Activated naive CD4-positive, alpha-beta T cell treated with anti-CD3 and anti-CD28 coated beads for 36 hours (primary cell): ENCODE measurements at regions of chr3 and their contacts with region 1.

Region 1: GRCh38 chr3:69161587-69162307 is 39.4 kb upstream of the LMOD3 start:
- DNase-seq: peak; percentile 56
- H3K4me3 Mint-ChIP-seq: no peak overlapping the region
- H3K27ac Mint-ChIP-seq: no peak overlapping the region
- H3K4me1 Mint-ChIP-seq: peaks cover 11% of the 10 kb centered on the region
- H3K27me3 Mint-ChIP-seq: peaks cover 1% of the 10 kb centered on the region

Region 2: DNA sequence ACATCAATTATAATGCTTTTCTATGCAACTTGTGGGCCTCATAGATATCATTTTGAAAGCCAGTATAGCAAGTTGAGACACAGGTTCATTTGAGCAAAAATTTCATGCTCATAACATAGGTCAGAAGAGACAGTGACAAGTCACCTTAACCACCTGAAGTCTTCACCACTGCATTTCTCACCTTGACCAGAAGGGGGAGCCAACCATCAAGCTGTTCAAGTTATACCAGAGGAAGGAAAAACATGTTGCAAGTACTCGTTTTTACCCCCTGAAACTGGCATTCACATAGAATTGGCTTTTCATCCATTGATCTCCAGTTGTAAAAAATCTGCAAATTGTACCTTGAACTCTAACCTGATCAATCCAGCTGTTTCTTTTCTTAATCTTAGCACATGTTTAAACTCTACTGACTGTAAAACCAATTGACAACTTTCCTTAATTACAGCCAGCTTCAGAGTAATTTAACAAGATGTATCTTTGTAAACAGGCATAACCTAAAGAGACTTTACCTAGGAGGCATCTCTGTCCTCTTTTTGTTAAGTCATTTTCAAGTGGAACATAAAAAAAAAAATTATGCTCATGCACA is 40.8 kb before region 1 on chr3:
- CTCF ChIA-PET with region 1: interaction called, 36 read pairs
- intact Hi-C with region 1: loop called (anchors 1 kb)
- DNase-seq: peak; percentile 95
- H3K4me3 Mint-ChIP-seq: no peak overlapping the region
- H3K27ac Mint-ChIP-seq: no peak overlapping the region
- H3K4me1 Mint-ChIP-seq: peaks cover 3% of the 10 kb centered on the region
- H3K27me3 Mint-ChIP-seq: no peaks in the 10 kb centered on the region

Region 3: DNA sequence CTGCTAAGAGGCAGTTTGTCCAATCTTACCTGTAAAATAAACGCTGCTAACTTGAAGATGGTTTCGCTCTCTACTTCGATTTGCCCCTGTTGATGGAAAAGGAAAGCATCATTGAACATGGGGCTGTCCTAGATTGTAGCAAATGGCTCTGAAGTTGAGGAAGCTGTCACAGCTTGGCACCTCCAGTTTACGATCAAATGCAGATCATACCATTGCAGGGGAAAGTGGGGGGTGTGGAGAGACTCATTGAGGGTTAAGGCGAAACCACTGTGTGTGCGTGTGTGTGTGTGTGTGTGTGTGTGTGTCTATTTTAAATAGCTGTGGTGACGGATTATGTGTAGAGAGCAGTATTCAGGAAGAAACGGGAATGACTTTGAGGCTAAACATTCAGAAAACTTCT is 88.3 kb after region 1 on chr3:
- CTCF ChIA-PET with region 1: interaction called, 19 read pairs
- intact Hi-C with region 1: no loop called
- DNase-seq: peak; percentile 86
- H3K4me3 Mint-ChIP-seq: peak overlapping the region; percentile 54
- H3K27ac Mint-ChIP-seq: peak overlapping the region; percentile 7
- H3K4me1 Mint-ChIP-seq: peaks cover 13% of the 10 kb centered on the region
- H3K27me3 Mint-ChIP-seq: no peaks in the 10 kb centered on the region

Region 4: DNA sequence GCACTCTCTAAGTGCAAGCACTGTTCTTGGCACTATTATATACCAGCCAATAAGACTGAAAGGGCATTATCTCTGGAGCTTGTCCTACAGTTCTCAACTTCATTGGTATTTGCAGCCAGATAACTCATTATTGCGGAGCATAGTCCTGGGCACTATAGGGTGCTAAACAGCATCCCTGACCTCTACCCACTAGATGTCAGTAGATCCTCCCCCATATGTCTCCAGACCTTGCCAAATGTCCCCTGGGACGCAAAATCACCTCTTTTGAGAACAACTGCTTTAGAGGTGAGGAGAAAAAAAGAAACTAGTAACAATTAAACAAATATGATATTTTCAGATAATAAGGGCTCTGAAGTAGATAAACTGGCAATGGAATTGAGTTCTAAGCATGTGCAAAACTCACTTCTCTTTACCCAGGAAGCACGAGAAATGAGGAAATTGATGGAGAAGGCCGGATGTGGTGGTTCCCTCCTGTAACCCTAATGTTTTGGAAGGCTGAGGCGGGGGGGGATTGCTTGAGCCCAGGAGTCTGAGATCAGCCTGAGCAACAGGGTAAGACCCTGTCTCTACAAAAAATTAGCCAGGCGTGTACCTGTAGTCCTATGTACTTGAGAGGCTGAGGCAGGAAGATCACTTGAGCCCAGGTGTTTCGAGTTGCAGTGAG is 162.7 kb after region 1 on chr3:
- CTCF ChIA-PET with region 1: interaction called, 29 read pairs
- intact Hi-C with region 1: no loop called
- DNase-seq: peak; percentile 18
- H3K4me3 Mint-ChIP-seq: no peak overlapping the region
- H3K27ac Mint-ChIP-seq: no peak overlapping the region
- H3K4me1 Mint-ChIP-seq: peaks cover 43% of the 10 kb centered on the region
- H3K27me3 Mint-ChIP-seq: no peaks in the 10 kb centered on the region

Region 5: GRCh38 chr3:69425261-69425660 is 263.5 kb after region 1 on chr3:
- CTCF ChIA-PET with region 1: interaction called, 8 read pairs
- intact Hi-C with region 1: loop called (anchors 1 kb)
- DNase-seq: peak; percentile 57
- H3K4me3 Mint-ChIP-seq: no peak overlapping the region
- H3K27ac Mint-ChIP-seq: no peak overlapping the region
- H3K4me1 Mint-ChIP-seq: peaks cover 5% of the 10 kb centered on the region
- H3K27me3 Mint-ChIP-seq: no peaks in the 10 kb centered on the region

Region 6: GRCh38 chr3:69671082-69671952 is 509.6 kb after region 1 on chr3:
- CTCF ChIA-PET with region 1: interaction called, 5 read pairs
- intact Hi-C with region 1: loop called (anchors 1 kb)
- DNase-seq: peak; percentile 30
- H3K4me3 Mint-ChIP-seq: no peak overlapping the region
- H3K27ac Mint-ChIP-seq: no peak overlapping the region
- H3K4me1 Mint-ChIP-seq: no peaks in the 10 kb centered on the region
- H3K27me3 Mint-ChIP-seq: no peaks in the 10 kb centered on the region